ENCODE measurements at regions of chr20 and their contacts with region 1.

Region 1: DNA sequence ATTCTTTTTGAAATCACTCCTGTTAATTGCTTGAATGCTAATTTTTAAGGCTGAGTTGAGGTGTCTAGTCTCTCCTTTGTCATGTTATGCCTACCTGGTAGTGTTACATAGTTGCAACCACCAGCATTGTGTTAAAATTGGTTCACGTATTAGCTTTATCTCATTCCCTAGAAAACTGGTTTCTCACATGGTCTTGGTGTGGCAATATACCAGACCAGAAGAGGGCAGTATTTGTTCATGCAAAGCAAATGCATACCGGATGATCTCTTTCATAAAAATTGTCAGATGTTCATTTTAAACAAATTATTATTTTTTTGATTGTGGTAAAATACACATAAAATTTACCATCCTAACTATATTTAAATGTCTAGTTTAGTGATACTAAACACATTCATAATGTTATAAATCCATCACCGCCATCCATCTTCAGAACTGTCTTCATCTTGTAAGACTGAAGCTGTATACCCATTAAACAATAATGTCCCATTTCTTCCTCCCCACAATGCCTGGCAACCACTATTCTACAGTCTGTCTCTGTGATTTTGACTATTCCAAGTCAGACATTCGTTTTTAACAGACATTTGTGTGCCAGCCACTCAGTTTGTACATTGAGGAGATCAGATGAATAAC is 92.8 kb downstream of the ATRN start:
- DNase-seq: no peak
- H3K4me3 ChIP-seq: no peak overlapping the region
- H3K27me3 ChIP-seq: no peaks in the 10 kb centered on the region
- CTCF ChIP-seq: peak; percentile 80

Region 2: GRCh38 chr20:3551681-3552434 is 11.8 kb before region 1 on chr20:
- CTCF ChIA-PET with region 1: interaction called, 21 read pairs
- POLR2A ChIA-PET with region 1: no interaction called
- DNase-seq: no peak
- H3K4me3 ChIP-seq: no peak overlapping the region
- H3K27me3 ChIP-seq: no peaks in the 10 kb centered on the region
- CTCF ChIP-seq: no peak

Region 3: GRCh38 chr20:3580412-3580811 is 16.7 kb after region 1 on chr20:
- CTCF ChIA-PET with region 1: interaction called, 15 read pairs
- POLR2A ChIA-PET with region 1: interaction called, 8 read pairs
- DNase-seq: no peak
- H3K4me3 ChIP-seq: no peak overlapping the region
- H3K27me3 ChIP-seq: no peaks in the 10 kb centered on the region
- CTCF ChIP-seq: no peak